ENCODE measurements at regions of chr6 and their contacts with region 1.

Region 1: DNA sequence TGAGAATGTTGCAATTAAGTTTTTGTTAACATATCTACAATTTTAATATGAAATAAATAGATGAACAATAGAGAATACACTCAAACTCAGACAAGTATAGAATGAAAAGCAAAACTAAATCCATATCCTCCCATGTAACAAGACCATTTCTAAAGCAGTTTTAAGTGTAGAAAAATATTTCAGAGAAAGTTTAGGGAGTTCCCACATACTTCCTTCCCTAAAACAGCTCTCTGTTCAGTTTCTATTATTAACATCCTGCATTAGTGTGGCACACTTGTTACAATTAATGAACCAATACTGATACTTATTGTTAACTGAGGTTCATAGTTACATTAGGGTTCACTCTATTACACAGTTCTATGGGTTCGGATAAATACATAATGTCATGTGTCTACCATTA is 38.4 kb downstream of the HLA-DRB5 start:
- DNase-seq: no peak
- H3K4me3 ChIP-seq: no peak overlapping the region
- H3K27ac ChIP-seq: no peak overlapping the region
- H3K4me1 ChIP-seq: no peaks in the 10 kb centered on the region
- H3K27me3 ChIP-seq: no peaks in the 10 kb centered on the region
- CTCF ChIP-seq: no peak
- POLR2A ChIP-seq: no peak

Region 2: DNA sequence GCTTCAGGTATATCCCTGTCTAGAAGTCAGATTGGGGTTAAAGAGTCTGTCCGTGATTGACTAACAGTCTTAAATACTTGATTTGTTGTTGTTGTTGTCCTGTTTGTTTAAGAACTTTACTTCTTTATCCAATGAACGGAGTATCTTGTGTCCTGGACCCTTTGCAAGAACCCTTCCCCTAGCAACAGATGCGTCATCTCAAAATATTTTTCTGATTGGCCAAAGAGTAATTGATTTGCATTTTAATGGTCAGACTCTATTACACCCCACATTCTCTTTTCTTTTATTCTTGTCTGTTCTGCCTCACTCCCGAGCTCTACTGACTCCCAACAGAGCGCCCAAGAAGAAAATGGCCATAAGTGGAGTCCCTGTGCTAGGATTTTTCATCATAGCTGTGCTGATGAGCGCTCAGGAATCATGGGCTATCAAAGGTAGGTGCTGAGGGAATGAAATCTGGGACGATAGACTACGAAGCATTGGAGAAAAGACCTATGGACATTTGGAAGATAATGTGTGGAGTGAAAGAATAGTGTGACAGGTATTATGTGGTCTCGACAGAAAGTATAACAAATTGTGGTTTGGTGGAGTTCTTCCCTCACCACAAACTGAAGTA is 52.0 kb before region 1 on chr6 and contains the start of gene HLA-DRA:
- CTCF ChIA-PET with region 1: no interaction called
- POLR2A ChIA-PET with region 1: no interaction called
- dilution Hi-C with region 1: no loop called
- intact Hi-C with region 1: no loop called
- DNase-seq: peak; percentile 81
- H3K4me3 ChIP-seq: no peak within 1 kb of the TSS
- H3K27ac ChIP-seq: no peak within 1 kb of the TSS
- H3K4me1 ChIP-seq: no peaks in the 10 kb centered on the region
- H3K27me3 ChIP-seq: peaks cover 10 to 23% of the 10 kb centered on the region in 2 experiments
- CTCF ChIP-seq: no peak
- POLR2A ChIP-seq: no peak
- total RNA-seq, gene HLA-DRA: not detected in 2 replicates

Region 3: GRCh38 chr6:32539839-32540238 is 48.1 kb after region 1 on chr6:
- CTCF ChIA-PET with region 1: no interaction called
- POLR2A ChIA-PET with region 1: no interaction called
- dilution Hi-C with region 1: no loop called
- intact Hi-C with region 1: loop called (anchors 5 kb)
- DNase-seq: no peak
- H3K4me3 ChIP-seq: no peak overlapping the region
- H3K27ac ChIP-seq: no peak overlapping the region
- H3K4me1 ChIP-seq: no peaks in the 10 kb centered on the region
- H3K27me3 ChIP-seq: no peaks in the 10 kb centered on the region
- CTCF ChIP-seq: no peak
- POLR2A ChIP-seq: no peak

Measured in endothelial cell of umbilical vein (primary cell).